ENCODE measurements at regions of chr11 and their contacts with region 1.

Region 1: DNA sequence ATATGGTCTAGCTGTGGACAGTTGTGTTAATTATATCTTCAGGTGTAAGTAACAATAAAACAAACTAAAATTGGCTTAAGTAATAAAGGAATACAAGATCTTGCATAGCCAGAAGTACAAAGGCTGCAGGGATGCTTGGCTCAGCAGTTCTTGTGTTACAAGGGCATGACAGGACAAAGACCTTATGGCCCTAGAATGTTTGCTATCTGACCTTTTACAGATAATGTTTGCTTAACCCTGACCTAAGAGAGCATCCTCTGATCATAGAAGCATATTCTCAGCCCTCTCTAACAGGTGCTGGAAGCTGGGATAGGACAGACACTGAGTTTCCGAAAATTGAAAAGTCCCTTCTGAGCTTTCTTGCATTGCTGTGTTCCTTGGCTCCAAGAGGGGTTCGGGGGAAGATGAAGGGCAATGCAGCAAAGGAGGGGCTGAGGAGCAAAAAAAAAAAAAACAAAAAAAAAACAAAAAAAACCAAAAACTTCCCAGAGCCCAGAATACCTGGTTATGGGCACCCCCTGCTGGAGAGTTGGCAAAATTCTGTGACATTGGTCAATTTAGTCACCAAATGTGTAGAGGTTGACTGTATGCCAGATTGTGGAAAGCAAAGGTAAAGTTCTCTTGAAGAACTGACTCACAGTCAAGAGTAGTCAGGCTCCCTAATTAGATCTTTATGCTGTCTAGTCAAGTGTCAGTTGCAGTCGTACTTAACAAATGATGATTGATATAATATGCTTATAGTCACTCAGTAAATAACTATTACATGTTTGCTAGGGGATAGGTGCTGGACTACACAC is 10.4 kb upstream of the HIKESHI start:
- DNase-seq: peak; percentile 65
- H3K4me3 Mint-ChIP-seq: no peak overlapping the region
- H3K27ac Mint-ChIP-seq: peak overlapping the region; percentile 74
- H3K4me1 Mint-ChIP-seq: peaks cover 59% of the 10 kb centered on the region
- H3K27me3 Mint-ChIP-seq: no peaks in the 10 kb centered on the region

Region 2: GRCh38 chr11:86244522-86245368 is 46.9 kb before region 1 on chr11 and contains the start of gene EED:
- CTCF ChIA-PET with region 1: interaction called, 3 read pairs
- POLR2A ChIA-PET with region 1: interaction called, 13 read pairs
- DNase-seq: peak; percentile 94
- H3K4me3 Mint-ChIP-seq: no peak within 1 kb of the TSS
- H3K27ac Mint-ChIP-seq: no peak within 1 kb of the TSS
- H3K4me1 Mint-ChIP-seq: peaks cover 41% of the 10 kb centered on the region
- H3K27me3 Mint-ChIP-seq: no peaks in the 10 kb centered on the region
- total RNA-seq, gene EED: 63.9 to 66.9 TPM

Region 3: DNA sequence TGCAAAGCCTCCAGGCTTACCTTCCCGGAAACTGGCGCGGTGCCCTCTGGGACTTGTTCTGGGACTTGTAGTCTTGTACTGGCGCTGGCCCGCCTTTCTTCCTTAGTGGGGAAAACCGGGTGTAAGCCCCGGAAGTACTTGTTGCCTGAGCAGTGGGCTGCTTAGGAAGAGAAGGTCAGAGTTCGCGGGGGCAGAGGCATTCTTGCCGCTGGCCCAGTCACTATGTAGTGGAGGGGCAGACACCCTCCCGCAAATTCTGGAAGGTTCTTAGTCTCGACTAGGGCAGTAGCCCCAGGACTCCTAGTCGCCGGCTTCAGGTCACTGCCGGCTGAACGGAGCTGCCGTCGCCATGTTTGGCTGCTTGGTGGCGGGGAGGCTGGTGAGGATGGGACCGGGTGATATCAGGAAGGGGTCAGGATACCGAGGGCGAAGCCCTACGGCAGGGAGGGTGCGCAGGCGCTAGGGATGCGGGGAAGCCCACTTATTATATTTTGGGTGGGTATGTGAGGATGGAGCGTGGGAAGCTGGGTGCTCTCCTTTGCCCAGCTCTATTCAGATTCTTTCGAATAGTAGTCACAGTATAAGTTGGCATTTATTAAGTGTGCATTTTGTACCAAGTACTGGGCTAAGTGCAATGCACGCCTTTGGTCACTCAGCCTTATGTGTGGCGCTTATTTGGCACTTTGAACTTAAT is 10.6 kb after region 1 on chr11 and contains the start of gene HIKESHI:
- CTCF ChIA-PET with region 1: interaction called, 8 read pairs
- POLR2A ChIA-PET with region 1: interaction called, 15 read pairs
- DNase-seq: peak; percentile 89
- H3K4me3 Mint-ChIP-seq: peak within 1 kb of the TSS; percentile 100
- H3K27ac Mint-ChIP-seq: peak within 1 kb of the TSS; percentile 88
- H3K4me1 Mint-ChIP-seq: peaks cover 28% of the 10 kb centered on the region
- H3K27me3 Mint-ChIP-seq: peaks cover 5% of the 10 kb centered on the region
- total RNA-seq, gene HIKESHI: 40.6 to 44.5 TPM

Measured in activated CD4-positive, alpha-beta memory T cell treated with anti-CD3 and anti-CD28 coated beads, Interleukin-2, amount 10 ng/mL, durations not matched to agents 7 days and 5 days (primary cell).